ENCODE measurements at regions of chr17 and their contacts with region 1.

Region 1: GRCh38 chr17:78013683-78014467 is 55.4 kb downstream of the TNRC6C start:
- DNase-seq: peak; percentile 81
- H3K4me3 Mint-ChIP-seq: no peak overlapping the region
- H3K27ac Mint-ChIP-seq: no peak overlapping the region
- H3K4me1 Mint-ChIP-seq: peaks cover 6% of the 10 kb centered on the region
- H3K27me3 Mint-ChIP-seq: no peaks in the 10 kb centered on the region
- CTCF ChIP-seq: peak; percentile 86

Region 2: DNA sequence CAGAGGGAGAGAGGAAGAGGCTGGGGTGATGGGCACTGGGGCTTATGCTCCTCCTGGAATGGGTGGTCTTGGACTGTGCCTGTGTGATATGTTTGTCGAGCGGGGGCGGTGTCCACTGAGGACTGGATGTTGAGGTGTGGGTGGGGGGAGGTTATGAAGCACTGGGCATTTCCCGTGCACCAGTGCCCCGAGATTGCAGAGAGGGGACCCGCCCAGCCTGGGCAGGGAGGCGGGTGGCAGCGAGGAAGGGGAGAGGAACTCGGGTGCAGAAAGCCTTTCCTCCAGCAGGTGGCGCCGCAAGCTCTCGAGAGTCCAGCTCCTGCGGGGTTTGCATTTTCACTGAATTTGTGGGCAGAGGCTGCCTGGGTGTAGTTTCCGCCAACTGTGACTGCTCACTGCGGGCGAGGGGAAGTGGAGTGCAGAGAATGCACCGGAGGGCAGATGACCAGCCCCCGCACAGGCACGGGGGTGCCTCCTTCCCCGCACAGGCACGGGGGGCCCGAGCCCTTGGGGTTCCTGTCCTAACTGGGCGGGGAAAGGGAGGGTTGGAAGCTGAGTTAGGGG is 682.5 kb before region 1 on chr17:
- CTCF ChIA-PET with region 1: interaction called, 3 read pairs
- POLR2A ChIA-PET with region 1: no interaction called
- intact Hi-C with region 1: loop called (anchors 10 kb)
- DNase-seq: peak; percentile 89
- H3K4me3 Mint-ChIP-seq: peak overlapping the region; percentile 48
- H3K27ac Mint-ChIP-seq: peak overlapping the region; percentile 46
- H3K4me1 Mint-ChIP-seq: peaks cover 33% of the 10 kb centered on the region
- H3K27me3 Mint-ChIP-seq: no peaks in the 10 kb centered on the region
- CTCF ChIP-seq: peak; percentile 97

Region 3: GRCh38 chr17:77542551-77543490 is 471.1 kb before region 1 on chr17:
- CTCF ChIA-PET with region 1: interaction called, 123 read pairs
- POLR2A ChIA-PET with region 1: interaction called, 13 read pairs
- intact Hi-C with region 1: loop called (anchors 1 kb)
- DNase-seq: peak; percentile 78
- H3K4me3 Mint-ChIP-seq: no peak overlapping the region
- H3K27ac Mint-ChIP-seq: no peak overlapping the region
- H3K4me1 Mint-ChIP-seq: no peaks in the 10 kb centered on the region
- H3K27me3 Mint-ChIP-seq: peaks cover 38% of the 10 kb centered on the region
- CTCF ChIP-seq: peak; percentile 93

Region 4: DNA sequence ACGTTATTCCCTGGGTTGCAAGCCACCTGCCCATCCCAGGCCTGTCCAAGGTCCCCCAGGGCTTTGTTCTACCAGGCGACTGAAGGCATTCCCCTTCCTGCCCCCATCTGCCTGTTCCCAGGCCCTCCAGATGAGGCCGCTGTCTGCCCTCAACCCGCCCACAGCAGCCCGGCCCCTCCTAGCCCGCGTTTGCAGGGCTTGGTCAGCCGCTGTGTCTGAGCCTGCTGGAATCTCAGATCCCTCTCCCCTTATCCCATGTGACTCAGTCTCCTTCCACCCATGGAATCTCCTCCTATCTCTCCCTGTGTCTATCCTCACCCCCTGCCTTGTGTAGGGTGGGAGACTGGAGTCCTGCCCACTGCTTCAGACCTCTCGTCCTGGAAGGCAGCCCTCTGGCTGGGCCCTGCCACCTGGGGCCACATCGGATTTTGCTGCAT is 241.4 kb before region 1 on chr17:
- CTCF ChIA-PET with region 1: interaction called, 4 read pairs
- POLR2A ChIA-PET with region 1: no interaction called
- intact Hi-C with region 1: loop called (anchors 1 kb)
- DNase-seq: peak; percentile 55
- H3K4me3 Mint-ChIP-seq: no peak overlapping the region
- H3K27ac Mint-ChIP-seq: no peak overlapping the region
- H3K4me1 Mint-ChIP-seq: peaks cover 5% of the 10 kb centered on the region
- H3K27me3 Mint-ChIP-seq: peaks cover 16% of the 10 kb centered on the region
- CTCF ChIP-seq: peak; percentile 67

Region 5: GRCh38 chr17:77957857-77958715 is 55.8 kb before region 1 on chr17 and contains the start of gene TNRC6C:
- CTCF ChIA-PET with region 1: interaction called, 6 read pairs
- POLR2A ChIA-PET with region 1: interaction called, 10 read pairs
- intact Hi-C with region 1: no loop called
- DNase-seq: peak; percentile 97
- H3K4me3 Mint-ChIP-seq: peak within 1 kb of the TSS; percentile 87
- H3K27ac Mint-ChIP-seq: no peak within 1 kb of the TSS
- H3K4me1 Mint-ChIP-seq: peaks cover 13% of the 10 kb centered on the region
- H3K27me3 Mint-ChIP-seq: peaks cover 43% of the 10 kb centered on the region
- CTCF ChIP-seq: no peak
- total RNA-seq, gene TNRC6C: 15.7 and 16.4 TPM in 2 replicates

Measured in MCF 10A (cell line).